ENCODE measurements at regions of chr16 and their contacts with region 1.

Region 1: DNA sequence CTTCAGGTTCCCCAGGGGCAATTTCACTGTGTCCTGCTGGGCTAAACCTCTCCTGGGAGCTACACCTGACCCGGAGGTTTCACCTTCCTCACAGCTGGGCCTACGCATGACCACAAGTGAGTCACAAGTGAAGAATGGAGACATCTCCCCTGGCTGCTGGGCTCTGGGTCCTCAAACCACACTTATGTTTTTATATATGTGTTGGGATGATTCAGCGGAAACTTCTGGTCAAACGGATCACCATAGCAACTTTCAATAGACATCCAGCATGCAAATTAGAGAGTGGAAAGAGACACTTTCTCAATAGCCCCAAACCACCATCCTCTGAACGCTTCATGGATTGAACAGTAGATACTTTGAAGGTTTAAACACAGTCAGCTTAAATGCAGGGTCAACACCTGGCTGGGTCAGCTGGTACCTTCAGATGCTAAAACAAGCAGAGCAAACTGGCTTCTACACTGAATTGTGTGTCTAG is 28.0 kb upstream of the MAF start:
- DNase-seq: peak; percentile 74
- H3K4me3 Mint-ChIP-seq: peak overlapping the region; percentile 9
- H3K27ac Mint-ChIP-seq: peak overlapping the region; percentile 86
- H3K4me1 Mint-ChIP-seq: peaks cover 56% of the 10 kb centered on the region
- H3K27me3 Mint-ChIP-seq: peaks cover 12% of the 10 kb centered on the region

Region 2: GRCh38 chr16:79081297-79082066 is 547.1 kb before region 1 on chr16:
- intact Hi-C with region 1: loop called (anchors 2 kb)
- DNase-seq: no peak
- H3K4me3 Mint-ChIP-seq: no peak overlapping the region
- H3K27ac Mint-ChIP-seq: peak overlapping the region; percentile 44
- H3K4me1 Mint-ChIP-seq: peaks cover 66% of the 10 kb centered on the region
- H3K27me3 Mint-ChIP-seq: peaks cover 2% of the 10 kb centered on the region

Region 3: DNA sequence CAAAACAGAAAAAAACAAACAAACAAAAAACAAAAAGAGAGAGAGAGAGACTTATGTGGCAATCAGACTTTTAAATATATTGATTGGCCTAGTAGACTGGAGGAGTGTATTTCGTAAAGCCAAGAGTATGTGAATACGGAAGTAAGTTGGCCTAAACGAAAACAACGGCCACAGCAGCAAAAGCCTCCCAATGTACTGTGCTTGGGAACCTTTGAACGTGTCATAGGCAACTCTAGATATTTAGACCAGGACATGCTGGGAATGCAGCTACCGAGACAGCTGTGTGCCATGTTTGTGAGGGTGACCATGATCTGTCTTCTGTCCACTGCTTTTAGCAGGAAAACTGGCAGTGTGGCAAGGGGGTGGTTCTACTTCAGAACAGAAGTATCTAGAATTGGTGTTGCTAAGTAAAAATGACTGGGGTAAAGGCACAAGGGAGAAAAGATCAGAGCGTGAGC is 35.4 kb before region 1 on chr16:
- intact Hi-C with region 1: no loop called
- DNase-seq: no peak
- H3K4me3 Mint-ChIP-seq: no peak overlapping the region
- H3K27ac Mint-ChIP-seq: no peak overlapping the region
- H3K4me1 Mint-ChIP-seq: peaks cover 42% of the 10 kb centered on the region
- H3K27me3 Mint-ChIP-seq: peaks cover 15% of the 10 kb centered on the region

Region 4: DNA sequence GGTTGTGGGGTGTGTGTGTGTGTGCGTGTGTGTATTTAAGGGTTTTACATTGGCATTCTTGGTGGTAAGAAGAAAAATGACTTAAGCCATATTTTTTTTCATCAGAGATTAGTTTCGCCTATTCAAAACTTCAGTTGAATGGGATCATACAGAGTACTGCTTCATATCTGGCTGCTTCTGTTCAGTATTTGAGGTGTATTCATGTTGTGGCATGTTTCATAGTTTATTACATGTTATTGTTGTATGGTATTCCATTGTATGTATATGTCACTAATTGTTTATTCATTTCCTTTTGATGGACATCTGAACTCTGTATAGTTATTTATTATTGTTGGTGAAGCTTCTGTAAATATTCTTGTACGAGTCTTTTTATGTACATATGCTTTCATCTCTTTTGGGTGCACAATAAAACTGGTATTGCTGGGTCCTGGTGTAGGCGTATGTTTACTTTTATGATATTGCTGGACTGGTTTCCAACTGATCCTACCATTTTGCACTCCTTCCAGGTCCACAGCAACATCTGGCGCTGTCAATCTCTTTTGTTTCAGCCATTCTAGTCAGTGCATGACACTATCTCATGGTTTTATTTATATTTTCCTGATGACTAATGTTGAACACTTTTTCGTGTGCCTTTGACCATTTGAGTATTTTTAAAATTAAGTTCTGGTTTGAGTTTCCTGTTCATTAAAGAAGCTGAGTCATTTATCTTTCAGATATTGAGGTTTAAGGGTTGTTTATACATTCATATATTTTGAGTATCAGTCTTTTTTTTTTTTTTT is 49.5 kb after region 1 on chr16:
- intact Hi-C with region 1: loop called (anchors 5 kb)
- DNase-seq: no peak
- H3K4me3 Mint-ChIP-seq: no peak overlapping the region
- H3K27ac Mint-ChIP-seq: no peak overlapping the region
- H3K4me1 Mint-ChIP-seq: no peaks in the 10 kb centered on the region
- H3K27me3 Mint-ChIP-seq: peaks cover 21% of the 10 kb centered on the region

Region 5: GRCh38 chr16:79717333-79718137 is 89.0 kb after region 1 on chr16:
- intact Hi-C with region 1: loop called (anchors 2 kb)
- DNase-seq: no peak
- H3K4me3 Mint-ChIP-seq: peak overlapping the region; percentile 47
- H3K27ac Mint-ChIP-seq: peak overlapping the region; percentile 63
- H3K4me1 Mint-ChIP-seq: peaks cover 40% of the 10 kb centered on the region
- H3K27me3 Mint-ChIP-seq: peaks cover 7% of the 10 kb centered on the region

Region 6: DNA sequence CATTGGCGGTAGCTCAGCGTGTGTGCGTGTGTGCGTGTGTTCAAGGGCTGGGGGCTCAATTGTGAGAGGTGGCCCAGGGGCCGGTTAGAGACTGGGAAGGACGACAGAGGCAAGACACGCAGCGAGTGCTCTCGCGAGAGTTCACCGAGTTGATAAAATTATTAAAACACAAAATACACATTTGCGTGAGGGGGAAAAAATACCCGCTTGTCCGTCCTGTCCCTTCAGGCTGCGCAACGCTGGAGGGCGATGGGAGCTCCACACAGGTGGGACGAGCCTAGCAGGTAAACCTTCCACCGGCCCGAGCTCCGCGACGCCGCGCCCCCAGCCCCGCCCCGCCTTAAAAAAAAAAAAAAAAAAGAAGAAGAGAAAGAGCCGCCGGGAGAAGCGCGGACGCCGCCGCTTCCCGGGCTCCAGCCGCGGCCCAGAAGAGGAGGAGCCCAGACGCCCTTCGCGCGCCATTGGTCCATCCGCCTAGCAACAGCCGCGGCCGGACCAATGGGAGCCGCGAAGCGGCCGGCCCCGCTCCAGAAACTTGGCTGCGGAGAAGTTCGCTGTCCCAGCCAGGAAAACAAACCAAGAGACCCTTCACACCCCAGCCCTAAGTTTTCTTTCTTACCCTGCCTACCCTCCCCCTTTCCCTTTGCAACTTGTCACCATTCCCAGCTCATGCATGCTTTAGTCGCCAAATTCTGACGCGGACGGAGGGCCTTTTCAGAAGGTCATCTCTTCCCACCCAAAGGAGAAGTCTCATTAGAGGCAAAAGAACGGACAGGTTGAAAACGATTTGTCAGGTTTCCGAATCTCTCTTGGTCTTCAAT is 141.9 kb after region 1 on chr16:
- intact Hi-C with region 1: loop called (anchors 5 kb)
- DNase-seq: peak; percentile 70
- H3K4me3 Mint-ChIP-seq: peak overlapping the region; percentile 85
- H3K27ac Mint-ChIP-seq: peak overlapping the region; percentile 82
- H3K4me1 Mint-ChIP-seq: peaks cover 26% of the 10 kb centered on the region
- H3K27me3 Mint-ChIP-seq: peaks cover 18% of the 10 kb centered on the region

Measured in activated T-helper 2 cell treated with anti-CD3 and anti-CD28 coated beads, Interferon-gamma antibody, Interleukin-2, Interleukin-4, amounts not matched to agents 10 μg/mL and 5 μg/mL and 100 μg/mL, durations not matched to agents 14 hours and 24 hours and 36 hours (primary cell).